WTC11 (cell line): ENCODE measurements at regions of chr12 and their contacts with region 1.

Region 1: DNA sequence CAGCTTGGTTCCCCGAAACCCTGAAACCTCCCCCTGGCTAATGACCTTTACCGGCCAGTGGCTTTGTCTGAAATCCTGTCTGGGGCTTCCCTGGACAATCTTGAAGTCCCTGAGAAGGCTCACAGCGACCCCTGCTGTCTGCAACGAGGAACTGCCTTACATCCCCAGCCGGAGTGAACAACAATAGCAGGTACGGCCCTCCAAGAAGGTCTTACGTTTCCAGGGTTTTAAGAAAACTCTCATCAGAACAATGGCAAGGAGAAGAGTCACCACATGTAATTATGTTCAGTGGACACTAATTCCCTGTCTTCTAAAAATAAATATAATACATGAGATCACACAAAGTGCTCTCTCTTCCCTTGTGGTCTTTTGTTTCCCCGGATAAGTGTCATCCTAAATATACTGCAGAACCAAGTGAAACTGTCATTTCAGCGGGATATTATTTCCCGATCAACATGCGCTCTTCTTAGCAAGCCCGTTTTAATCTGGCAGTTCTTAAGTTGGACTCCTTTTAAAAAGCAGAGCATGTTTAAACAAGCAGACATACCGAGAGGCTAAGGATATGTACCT is 53.3 kb downstream of the RBM19 start:
- DNase-seq: peak; percentile 89
- ATAC-seq: peak; percentile 92
- H3K4me3 Mint-ChIP-seq: no peak overlapping the region
- H3K27ac Mint-ChIP-seq: no peak overlapping the region; the same call in 1 of the 2 replicates
- H3K4me1 Mint-ChIP-seq: peaks cover 7% of the 10 kb centered on the region
- H3K27me3 Mint-ChIP-seq: no peaks in the 10 kb centered on the region
- CTCF ChIP-seq: peak; percentile 91

Region 2: GRCh38 chr12:113826805-113827538 is 85.9 kb before region 1 on chr12:
- CTCF ChIA-PET with region 1: interaction called, 11 read pairs
- POLR2A ChIA-PET with region 1: no interaction called
- DNase-seq: peak; percentile 29
- ATAC-seq: no peak; the same call in 1 of the 2 replicates
- H3K4me3 Mint-ChIP-seq: no peak overlapping the region
- H3K27ac Mint-ChIP-seq: no peak overlapping the region
- H3K4me1 Mint-ChIP-seq: peaks cover 7% of the 10 kb centered on the region
- H3K27me3 Mint-ChIP-seq: no peaks in the 10 kb centered on the region
- CTCF ChIP-seq: no peak

Region 3: DNA sequence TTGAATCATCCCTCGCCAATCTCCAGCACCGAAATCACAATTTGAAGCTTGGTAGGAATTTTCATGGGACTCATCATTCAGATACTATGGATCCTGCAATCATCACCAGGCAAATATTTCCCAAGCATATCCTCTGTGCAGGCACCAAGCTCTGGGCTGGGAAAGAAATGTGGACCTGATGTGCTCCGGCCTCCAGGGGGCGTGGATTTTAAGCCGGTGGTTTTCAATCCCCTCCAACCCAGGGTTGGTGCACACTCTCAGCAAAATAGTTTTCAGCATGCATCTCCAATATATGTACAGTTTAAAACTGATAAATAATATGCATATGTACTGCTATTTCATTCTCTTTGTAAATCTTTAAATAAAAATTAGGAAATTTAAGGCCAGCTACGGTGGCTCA is 45.6 kb before region 1 on chr12:
- CTCF ChIA-PET with region 1: interaction called, 13 read pairs
- POLR2A ChIA-PET with region 1: no interaction called
- DNase-seq: peak; percentile 62
- ATAC-seq: peak; percentile 50
- H3K4me3 Mint-ChIP-seq: no peak overlapping the region
- H3K27ac Mint-ChIP-seq: no peak overlapping the region
- H3K4me1 Mint-ChIP-seq: peaks cover 20% of the 10 kb centered on the region
- H3K27me3 Mint-ChIP-seq: no peaks in the 10 kb centered on the region
- CTCF ChIP-seq: peak; percentile 26; the same call in 1 of the 2 replicates

Region 4: GRCh38 chr12:113973109-113973904 is 60.5 kb after region 1 on chr12:
- CTCF ChIA-PET with region 1: no interaction called
- POLR2A ChIA-PET with region 1: no interaction called
- DNase-seq: no peak
- ATAC-seq: no peak
- H3K4me3 Mint-ChIP-seq: no peak overlapping the region
- H3K27ac Mint-ChIP-seq: no peak overlapping the region
- H3K4me1 Mint-ChIP-seq: peaks cover 5% of the 10 kb centered on the region; the same call in 1 of the 2 replicates
- H3K27me3 Mint-ChIP-seq: peaks cover 41% of the 10 kb centered on the region
- CTCF ChIP-seq: no peak